A549 (cell line): ENCODE measurements at regions of chr3 and their contacts with region 1.

Region 1: DNA sequence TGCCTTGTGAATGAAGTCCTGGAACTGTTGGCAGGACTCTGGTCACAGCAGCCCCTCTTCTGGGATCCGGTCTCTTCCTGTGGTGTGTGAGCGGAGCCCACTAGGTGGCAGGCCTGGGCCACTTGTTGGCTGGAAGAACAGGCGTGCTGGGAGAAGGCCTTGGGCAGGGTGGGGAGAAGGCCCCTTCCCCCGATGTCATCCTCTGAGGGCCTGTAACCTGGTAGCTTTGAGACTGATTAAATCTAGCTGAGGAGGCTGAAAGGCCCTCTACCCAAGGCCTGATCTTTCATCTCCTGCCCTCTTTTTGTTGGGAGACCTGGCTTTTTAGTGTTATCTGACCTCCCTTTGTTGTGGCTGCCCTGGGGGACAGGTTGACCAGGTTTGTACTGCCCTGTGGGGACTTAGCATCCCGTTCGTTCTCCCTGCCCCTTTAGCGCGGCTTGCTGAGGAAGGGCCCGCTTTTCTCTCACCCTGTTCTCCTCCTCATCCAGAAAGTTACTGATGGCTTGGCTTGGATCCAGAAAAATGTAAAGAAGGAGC is 48.3 kb downstream of the CHCHD6 start:
- DNase-seq: peak; percentile 49 to 65
- ATAC-seq: peak; percentile 98 to 99
- H3K4me3 ChIP-seq: no peak overlapping the region
- H3K27ac ChIP-seq: peak overlapping the region; percentile 44 to 74; a peak in 2 of 6 replicates
- H3K4me1 ChIP-seq: peaks cover 14% of the 10 kb centered on the region; the same call in 2 of the 3 replicates
- CTCF ChIP-seq: peak; percentile 77
- EP300 ChIP-seq: no peak
- POLR2A ChIP-seq: no peak
- RAD21 ChIP-seq: peak; percentile 90 to 91

Region 2: GRCh38 chr3:126721246-126721645 is 31.1 kb before region 1 on chr3:
- CTCF ChIA-PET with region 1: no interaction called
- POLR2A ChIA-PET with region 1: no interaction called
- DNase-seq: no peak
- ATAC-seq: no peak
- H3K4me3 ChIP-seq: no peak overlapping the region
- H3K27ac ChIP-seq: no peak overlapping the region
- H3K4me1 ChIP-seq: no peaks in the 10 kb centered on the region
- CTCF ChIP-seq: no peak
- EP300 ChIP-seq: no peak
- POLR2A ChIP-seq: no peak
- RAD21 ChIP-seq: no peak

Region 3: DNA sequence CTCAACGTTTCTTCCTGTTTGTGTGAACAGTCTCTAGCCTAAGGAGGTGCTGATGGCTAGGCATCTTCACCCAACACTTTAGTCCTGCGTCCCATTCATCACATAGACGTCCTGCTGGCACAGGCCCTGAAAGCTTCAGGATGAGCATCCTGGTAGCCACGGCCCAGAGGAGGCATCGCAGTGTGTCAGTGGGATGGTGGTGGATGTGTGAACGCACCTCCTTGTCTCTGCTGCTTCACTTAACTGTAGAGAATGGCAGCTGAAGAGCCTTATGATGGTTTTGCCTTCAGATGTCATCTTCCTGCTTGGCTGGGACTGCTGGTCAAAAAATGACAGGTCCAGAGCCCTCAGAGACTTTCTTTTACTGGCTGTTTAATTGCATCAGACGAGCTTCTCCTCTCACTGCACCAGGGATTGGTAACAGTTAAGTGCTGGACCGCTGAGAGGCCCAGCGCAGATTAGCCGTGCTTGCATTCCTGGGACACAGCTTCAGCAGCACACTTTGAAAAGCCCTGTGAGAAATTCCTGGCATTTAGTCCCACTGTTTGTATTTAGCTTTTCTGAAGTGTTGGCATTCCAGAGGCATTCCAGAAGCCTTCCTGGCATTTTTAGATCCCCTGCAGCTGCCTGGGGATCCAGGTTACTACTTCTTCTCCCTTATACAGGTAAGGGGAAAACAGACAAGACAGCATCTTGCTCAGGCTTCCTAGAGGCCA is 98.2 kb after region 1 on chr3:
- CTCF ChIA-PET with region 1: interaction called, 14 read pairs
- POLR2A ChIA-PET with region 1: no interaction called
- DNase-seq: peak in 1 of 2 experiments; percentile 41
- ATAC-seq: peak; percentile 84 to 90; a peak in 5 of 6 replicates
- H3K4me3 ChIP-seq: no peak overlapping the region
- H3K27ac ChIP-seq: peak overlapping the region; percentile 59 to 82
- H3K4me1 ChIP-seq: peaks cover 41% of the 10 kb centered on the region
- CTCF ChIP-seq: no peak
- EP300 ChIP-seq: peak; percentile 14 to 39; a peak in 1 of 5 replicates
- POLR2A ChIP-seq: no peak
- RAD21 ChIP-seq: peak in 1 of 2 experiments; percentile 2; a peak in 1 of 5 replicates

Region 4: GRCh38 chr3:126954141-126954842 is 201.9 kb after region 1 on chr3:
- CTCF ChIA-PET with region 1: interaction called, 10 read pairs
- POLR2A ChIA-PET with region 1: no interaction called
- DNase-seq: no peak
- ATAC-seq: no peak
- H3K4me3 ChIP-seq: no peak overlapping the region
- H3K27ac ChIP-seq: no peak overlapping the region
- H3K4me1 ChIP-seq: no peaks in the 10 kb centered on the region
- CTCF ChIP-seq: no peak
- EP300 ChIP-seq: no peak
- POLR2A ChIP-seq: no peak
- RAD21 ChIP-seq: no peak

Region 5: DNA sequence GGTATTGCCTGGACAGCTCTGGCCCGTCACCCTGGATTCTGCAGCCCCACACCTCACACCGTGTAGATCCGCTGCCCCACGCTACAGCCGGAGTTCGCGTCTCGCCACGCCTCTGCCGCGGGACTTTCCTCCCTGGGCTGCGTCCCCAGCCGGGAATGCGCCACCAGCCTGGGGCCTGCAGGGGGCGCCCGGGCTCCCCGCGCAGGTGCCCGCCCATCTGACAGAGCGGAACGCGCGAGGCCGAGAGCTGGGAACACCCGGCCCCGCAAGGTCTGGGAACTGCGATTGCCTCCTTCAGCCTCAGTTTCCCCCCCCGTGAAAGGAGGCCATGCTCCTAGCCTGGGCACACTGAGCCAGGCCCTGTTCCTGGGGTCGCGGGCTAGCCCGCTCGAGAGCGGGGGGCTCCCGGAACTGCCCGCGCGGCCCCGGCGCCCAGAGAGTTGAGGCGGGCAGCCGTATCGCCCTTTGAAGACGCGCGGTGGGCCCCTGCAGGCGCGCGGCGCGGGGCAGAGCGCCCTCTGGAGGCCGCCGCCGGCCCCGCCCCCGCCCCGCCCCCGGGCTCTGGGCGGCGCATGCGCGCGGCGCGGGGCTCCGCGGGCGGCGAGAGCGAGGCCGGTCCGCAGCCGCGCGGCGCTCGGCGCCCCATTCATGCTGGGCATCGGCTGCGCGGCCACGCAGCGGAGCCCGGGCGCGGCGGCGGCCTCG is 230.2 kb after region 1 on chr3 and contains the start of gene PLXNA1:
- CTCF ChIA-PET with region 1: interaction called, 71 read pairs
- POLR2A ChIA-PET with region 1: no interaction called
- DNase-seq: peak; percentile 66 to 81
- ATAC-seq: peak; percentile 83 to 87
- H3K4me3 ChIP-seq: peak within 1 kb of the TSS; percentile 85
- H3K27ac ChIP-seq: peak within 1 kb of the TSS; percentile 96 to 97
- H3K4me1 ChIP-seq: peaks cover 17% of the 10 kb centered on the region
- CTCF ChIP-seq: peak; percentile 85
- EP300 ChIP-seq: no peak
- POLR2A ChIP-seq: peak; percentile 49
- RAD21 ChIP-seq: peak; percentile 27 to 53; a peak in 3 of 5 replicates
- polyA plus RNA-seq, gene PLXNA1: 9.1 and 10.9 TPM in 2 replicates